ENCODE measurements at regions of chr4 and their contacts with region 1.

Region 1: DNA sequence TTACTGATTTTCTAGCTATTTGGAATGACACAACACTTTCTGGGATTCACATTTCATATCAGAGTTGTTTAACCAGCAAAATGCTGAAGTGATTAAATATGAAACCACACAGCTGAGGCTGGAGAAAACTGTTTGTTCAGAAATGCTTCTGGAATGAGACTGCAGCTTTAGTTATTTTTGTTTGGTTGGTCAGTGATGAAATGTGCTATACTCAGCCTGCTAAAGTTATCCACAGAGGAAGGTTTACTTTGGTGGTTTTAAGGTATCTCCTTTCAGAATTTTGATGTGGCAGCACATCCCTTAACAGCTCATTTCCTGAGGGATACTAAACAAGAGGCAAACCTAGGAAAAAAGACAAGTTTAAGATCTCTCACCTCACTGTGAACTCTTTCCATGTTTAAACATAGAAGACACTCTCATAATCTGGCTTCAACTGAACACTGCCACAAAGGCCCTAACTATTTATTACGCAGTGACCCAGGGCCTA is 106.6 kb upstream of the PDE5A start:
- DNase-seq: no peak
- ATAC-seq: peak; percentile 61
- H3K4me3 ChIP-seq: no peak overlapping the region
- H3K27ac ChIP-seq: peak overlapping the region; percentile 17 to 86
- H3K4me1 ChIP-seq: peaks cover 7 to 11% of the 10 kb centered on the region in 2 donors
- H3K27me3 ChIP-seq: no peaks in the 10 kb centered on the region

Region 2: DNA sequence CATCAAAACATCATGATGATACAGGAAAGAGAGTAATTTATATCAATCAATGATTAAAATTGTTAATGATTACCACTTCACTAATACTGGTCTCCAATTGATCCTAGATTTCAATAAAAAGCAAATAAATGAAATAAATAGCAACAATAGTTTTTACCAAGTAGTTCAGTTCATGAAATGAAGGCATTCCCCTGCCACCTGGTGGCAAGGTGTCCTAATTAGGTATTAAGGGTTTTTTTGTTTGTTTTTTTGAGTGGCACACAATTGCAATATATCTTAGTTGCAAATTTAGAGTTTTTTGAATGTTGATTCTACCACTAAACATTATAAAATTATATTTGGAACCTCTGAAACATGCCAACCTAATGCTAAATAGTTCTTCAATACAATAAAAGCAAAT is 50.8 kb after region 1 on chr4:
- intact Hi-C with region 1: loop called in 1 of 2 experiments (anchors 5 kb)
- DNase-seq: no peak
- ATAC-seq: no peak
- H3K4me3 ChIP-seq: no peak overlapping the region
- H3K27ac ChIP-seq: no peak overlapping the region
- H3K4me1 ChIP-seq: peaks cover 0 to 2% of the 10 kb centered on the region in 2 donors
- H3K27me3 ChIP-seq: no peaks in the 10 kb centered on the region

Region 3: GRCh38 chr4:120327276-120327675 is 592.1 kb after region 1 on chr4:
- intact Hi-C with region 1: no loop called
- DNase-seq: no peak
- ATAC-seq: no peak
- H3K4me3 ChIP-seq: no peak overlapping the region
- H3K27ac ChIP-seq: no peak overlapping the region
- H3K4me1 ChIP-seq: no peaks in the 10 kb centered on the region
- H3K27me3 ChIP-seq: no peaks in the 10 kb centered on the region

Measured in aorta (tissue), 5 donors.